H1 (cell line): ENCODE measurements at regions of chr10 and their contacts with region 1.

Region 1: DNA sequence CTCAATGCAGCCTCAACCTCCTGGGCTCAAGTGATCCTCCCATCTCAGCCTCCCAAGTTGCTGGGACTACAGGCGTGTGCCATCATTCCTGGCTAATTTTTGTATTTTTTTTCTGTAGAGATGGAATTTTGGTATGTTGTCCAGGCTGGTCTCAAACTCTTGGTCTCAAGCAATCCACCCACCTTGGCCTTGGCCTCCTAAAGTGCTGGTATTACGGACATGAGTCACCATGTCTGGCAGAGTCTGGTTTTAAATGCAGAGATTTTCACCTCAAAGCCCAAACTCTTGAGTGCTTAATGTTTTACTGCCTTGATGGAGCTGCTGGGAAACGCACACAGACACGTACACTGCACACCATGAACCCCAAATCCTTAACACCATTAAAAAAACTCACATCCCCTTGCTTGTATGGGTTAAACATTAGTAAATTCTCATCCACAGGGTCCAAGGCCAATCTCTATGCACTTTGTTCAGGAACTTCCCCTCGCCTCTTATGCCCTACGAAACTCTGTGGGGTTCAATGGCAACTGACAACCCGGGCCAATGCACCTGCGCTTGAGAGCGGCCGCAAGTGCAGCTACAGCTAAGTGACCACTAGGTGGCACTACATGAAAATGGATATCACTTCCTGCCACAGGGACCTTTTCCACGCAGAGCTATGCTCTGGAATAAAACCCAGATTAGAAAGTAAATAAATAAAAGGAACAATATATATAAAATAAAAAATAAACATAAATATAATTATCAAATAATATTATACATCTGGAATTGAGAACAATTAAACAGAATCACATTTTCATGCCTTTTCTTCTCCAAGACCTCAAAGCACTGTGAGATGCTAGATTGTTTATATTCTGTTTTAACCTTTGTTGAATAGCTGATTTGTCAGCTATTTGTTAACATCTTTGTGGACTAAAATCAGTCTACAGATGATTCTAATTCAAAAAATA is 66.9 kb upstream of the AFAP1L2 start:
- DNase-seq: peak in 1 of 2 experiments; percentile 58
- H3K4me3 ChIP-seq: no peak overlapping the region
- H3K27ac ChIP-seq: no peak overlapping the region
- H3K4me1 ChIP-seq: peaks cover 4 to 9% (median 7%) of the 10 kb centered on the region in 4 experiments; a peak in 6 of 7 replicates
- H3K27me3 ChIP-seq: no peaks in the 10 kb centered on the region
- CTCF ChIP-seq: peak; percentile 74 to 83 (median 79)
- EP300 ChIP-seq: no peak
- POLR2A ChIP-seq: no peak
- RAD21 ChIP-seq: peak; percentile 89

Region 2: GRCh38 chr10:114458955-114459354 is 12.3 kb before region 1 on chr10:
- CTCF ChIA-PET with region 1: interaction called, 32 read pairs
- POLR2A ChIA-PET with region 1: no interaction called
- DNase-seq: peak; percentile 39 to 82
- H3K4me3 ChIP-seq: no peak overlapping the region
- H3K27ac ChIP-seq: no peak overlapping the region
- H3K4me1 ChIP-seq: no peaks in the 10 kb centered on the region
- H3K27me3 ChIP-seq: no peaks in the 10 kb centered on the region
- CTCF ChIP-seq: peak; percentile 76 to 85 (median 83)
- EP300 ChIP-seq: no peak
- POLR2A ChIP-seq: no peak
- RAD21 ChIP-seq: peak; percentile 76 to 82

Region 3: DNA sequence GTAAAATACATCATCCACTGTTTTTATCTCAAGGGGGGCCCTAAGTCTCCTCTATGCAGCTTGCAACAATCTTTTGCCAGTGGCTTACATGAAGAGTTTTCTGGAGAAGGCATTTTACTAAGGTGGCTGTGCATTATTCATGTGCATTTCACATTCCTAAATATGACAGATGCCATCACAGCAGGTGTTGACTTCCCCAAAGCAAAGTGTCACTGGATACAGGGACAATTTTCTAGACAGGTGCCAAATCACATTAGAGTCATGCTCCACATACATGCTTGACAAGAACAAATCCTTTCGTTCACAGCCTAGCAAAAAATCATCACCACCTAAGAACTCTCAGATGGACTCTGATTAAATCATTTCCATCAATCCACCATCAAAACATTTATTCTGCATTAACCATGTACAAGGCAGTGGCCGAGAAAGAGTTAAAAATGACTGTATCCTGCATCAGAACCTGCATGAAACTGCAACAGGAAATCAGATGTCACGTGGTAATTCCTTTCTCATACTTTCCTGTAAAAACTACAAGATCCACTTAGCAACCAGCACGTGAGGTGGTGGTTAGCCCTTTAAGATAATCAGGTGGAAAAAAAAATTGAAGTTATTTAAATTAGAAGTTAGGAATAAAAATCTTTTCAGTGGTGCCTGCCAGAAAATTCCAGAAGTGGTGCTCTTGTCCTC is 21.3 kb after region 1 on chr10:
- CTCF ChIA-PET with region 1: interaction called, 89 read pairs
- POLR2A ChIA-PET with region 1: no interaction called
- DNase-seq: no peak
- H3K4me3 ChIP-seq: no peak overlapping the region
- H3K27ac ChIP-seq: no peak overlapping the region
- H3K4me1 ChIP-seq: peaks cover 5 to 12% (median 10%) of the 10 kb centered on the region in 4 experiments; a peak in 6 of 7 replicates
- H3K27me3 ChIP-seq: no peaks in the 10 kb centered on the region
- CTCF ChIP-seq: no peak
- EP300 ChIP-seq: no peak
- POLR2A ChIP-seq: no peak
- RAD21 ChIP-seq: no peak

Region 4: DNA sequence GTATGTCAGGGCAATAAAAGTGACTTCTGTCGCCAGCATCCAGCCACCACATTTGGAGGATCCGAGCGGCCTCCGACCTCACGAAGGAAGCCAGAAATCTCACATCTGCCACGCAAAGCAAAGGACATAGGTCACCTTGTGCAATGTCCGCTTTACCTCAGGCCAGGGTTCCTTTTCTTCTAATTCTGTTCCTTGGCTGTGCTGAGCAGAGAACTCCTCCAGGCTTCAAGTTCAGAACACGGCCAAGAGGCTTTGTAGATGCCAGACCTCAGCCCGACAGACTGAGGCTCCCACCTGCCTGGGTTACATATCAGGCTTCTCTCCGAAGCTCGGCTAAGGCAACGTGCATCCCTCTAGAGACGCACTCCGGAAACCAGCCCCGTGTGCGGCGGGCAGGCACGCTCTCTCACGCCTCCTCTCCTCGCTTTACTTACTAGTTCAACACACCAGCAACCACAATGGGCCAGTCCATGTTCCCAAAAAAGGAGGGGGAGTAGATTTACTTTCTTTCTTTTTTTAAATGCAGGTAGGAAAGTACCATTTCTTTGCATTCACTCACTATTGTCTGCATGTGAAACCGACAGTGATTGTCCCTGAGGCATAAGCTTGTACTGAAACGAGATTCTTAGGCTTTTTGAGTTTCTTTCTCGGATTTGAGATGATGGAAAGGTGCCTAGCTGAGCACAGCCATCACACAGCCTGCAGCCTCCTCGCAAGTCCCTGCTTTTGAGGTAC is 55.4 kb after region 1 on chr10:
- CTCF ChIA-PET with region 1: interaction called, 38 read pairs
- POLR2A ChIA-PET with region 1: interaction called, 8 read pairs
- DNase-seq: peak; percentile 77 to 83
- H3K4me3 ChIP-seq: peak overlapping the region; percentile 45 to 73 (median 66)
- H3K27ac ChIP-seq: peak overlapping the region; percentile 26
- H3K4me1 ChIP-seq: peaks cover 3 to 23% (median 9%) of the 10 kb centered on the region in 4 experiments; a peak in 5 of 7 replicates
- H3K27me3 ChIP-seq: no peaks in the 10 kb centered on the region
- CTCF ChIP-seq: no peak
- EP300 ChIP-seq: peak in 1 of 2 experiments; percentile 97; a peak in 2 of 3 replicates
- POLR2A ChIP-seq: peak; percentile 66 to 91
- RAD21 ChIP-seq: no peak

Region 5: GRCh38 chr10:114541081-114541796 is 70.0 kb after region 1 on chr10:
- CTCF ChIA-PET with region 1: interaction called, 186 read pairs
- POLR2A ChIA-PET with region 1: interaction called, 3 read pairs
- DNase-seq: no peak
- H3K4me3 ChIP-seq: no peak overlapping the region
- H3K27ac ChIP-seq: no peak overlapping the region
- H3K4me1 ChIP-seq: peaks cover 6 to 11% (median 10%) of the 10 kb centered on the region in 4 experiments
- H3K27me3 ChIP-seq: peaks cover 0 to 10% (median 0%) of the 10 kb centered on the region in 4 experiments; a peak in 3 of 7 replicates
- CTCF ChIP-seq: no peak
- EP300 ChIP-seq: no peak
- POLR2A ChIP-seq: no peak
- RAD21 ChIP-seq: no peak

Region 6: DNA sequence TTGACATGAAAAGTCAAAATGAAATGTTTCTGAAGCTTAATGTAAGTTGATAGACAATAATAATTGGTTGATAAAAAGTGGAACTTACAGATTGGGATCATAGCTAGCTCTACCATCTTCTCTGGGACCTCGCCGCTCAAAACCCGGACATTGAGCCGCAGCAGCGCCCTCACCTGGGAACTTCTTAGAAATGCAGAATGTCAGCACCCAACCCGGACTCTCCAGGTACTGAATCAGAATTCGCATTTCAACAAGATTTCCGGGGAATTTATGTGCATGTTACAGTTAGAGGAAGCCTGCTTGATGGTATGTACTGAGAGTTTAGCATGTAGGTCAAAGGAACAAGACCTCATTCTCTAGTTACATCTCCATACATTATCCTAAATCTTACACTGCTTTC is 223.5 kb after region 1 on chr10:
- CTCF ChIA-PET with region 1: interaction called, 15 read pairs
- POLR2A ChIA-PET with region 1: no interaction called
- DNase-seq: peak in 1 of 2 experiments; percentile 81
- H3K4me3 ChIP-seq: no peak overlapping the region
- H3K27ac ChIP-seq: no peak overlapping the region
- H3K4me1 ChIP-seq: no peaks in the 10 kb centered on the region
- H3K27me3 ChIP-seq: no peaks in the 10 kb centered on the region
- CTCF ChIP-seq: peak; percentile 73 to 86 (median 83)
- EP300 ChIP-seq: no peak
- POLR2A ChIP-seq: no peak
- RAD21 ChIP-seq: peak; percentile 79 to 85